GM12878 (cell line): ENCODE measurements at regions of chr3 and their contacts with region 1.

Region 1: GRCh38 chr3:32901432-32902409 is 49.7 kb upstream of the CCR4 start:
- DNase-seq: no peak
- ATAC-seq: peak; percentile 70
- H3K4me3 ChIP-seq: no peak overlapping the region
- H3K27ac ChIP-seq: no peak overlapping the region
- H3K4me1 ChIP-seq: no peaks in the 10 kb centered on the region; the same call in 1 of the 2 replicates
- H3K27me3 ChIP-seq: no peaks in the 10 kb centered on the region
- CTCF ChIP-seq: peak; percentile 24 to 38 (median 32); a peak in 5 of 6 replicates
- EP300 ChIP-seq: no peak
- POLR2A ChIP-seq: no peak
- RAD21 ChIP-seq: no peak

Region 2: GRCh38 chr3:32401556-32402081 is 500.1 kb before region 1 on chr3:
- CTCF ChIA-PET with region 1: no interaction called
- POLR2A ChIA-PET with region 1: no interaction called
- RAD21 ChIA-PET with region 1: no interaction called
- SMC1A ChIA-PET with region 1: no interaction called
- in situ Hi-C with region 1: no loop called
- intact Hi-C with region 1: no loop called
- DNase-seq: no peak
- ATAC-seq: peak; percentile 83
- H3K4me3 ChIP-seq: peak overlapping the region; percentile 61
- H3K27ac ChIP-seq: no peak overlapping the region
- H3K4me1 ChIP-seq: peaks cover 3% of the 10 kb centered on the region
- H3K27me3 ChIP-seq: peaks cover 0 to 3% of the 10 kb centered on the region in 2 experiments; a peak in 1 of 4 replicates
- CTCF ChIP-seq: no peak
- EP300 ChIP-seq: no peak
- POLR2A ChIP-seq: no peak
- RAD21 ChIP-seq: no peak

Region 3: DNA sequence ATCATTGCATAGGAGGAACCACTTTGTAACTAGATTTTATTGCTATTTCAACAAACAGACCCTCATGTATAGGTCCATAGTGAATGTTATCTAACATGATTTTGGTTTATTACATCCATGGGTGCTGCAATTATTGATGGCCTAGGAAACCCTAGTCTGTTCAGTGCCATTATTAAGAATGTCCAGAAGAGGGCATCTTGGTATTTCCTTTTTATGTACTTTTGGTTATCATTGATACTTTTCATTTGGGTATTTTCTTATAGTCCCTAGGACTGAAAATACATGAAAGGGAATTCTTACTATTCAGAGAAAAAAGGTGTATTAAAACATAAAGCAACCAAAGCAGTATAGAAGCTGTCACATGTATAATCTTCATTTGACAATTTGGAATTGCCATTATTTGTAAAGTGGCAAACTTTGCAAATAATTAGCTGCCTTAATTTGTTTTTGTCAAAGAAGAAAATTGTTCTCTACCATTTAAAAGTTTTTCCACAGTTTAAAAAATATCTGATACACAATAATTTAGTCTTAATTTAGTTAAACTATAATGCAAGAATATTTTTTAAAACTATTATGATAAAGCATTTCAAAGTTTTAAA is 168.0 kb before region 1 on chr3:
- CTCF ChIA-PET with region 1: interaction called, 20 read pairs
- POLR2A ChIA-PET with region 1: no interaction called
- RAD21 ChIA-PET with region 1: interaction called, 6 read pairs
- SMC1A ChIA-PET with region 1: interaction called, 17 read pairs
- in situ Hi-C with region 1: no loop called
- intact Hi-C with region 1: loop called (anchors 10 kb)
- DNase-seq: peak; percentile 4
- ATAC-seq: peak; percentile 73
- H3K4me3 ChIP-seq: no peak overlapping the region
- H3K27ac ChIP-seq: no peak overlapping the region
- H3K4me1 ChIP-seq: no peaks in the 10 kb centered on the region
- H3K27me3 ChIP-seq: no peaks in the 10 kb centered on the region
- CTCF ChIP-seq: peak; percentile 48 to 57 (median 57); a peak in 5 of 6 replicates
- EP300 ChIP-seq: no peak
- POLR2A ChIP-seq: no peak
- RAD21 ChIP-seq: peak; percentile 64

Region 4: GRCh38 chr3:32781210-32781968 is 120.3 kb before region 1 on chr3:
- CTCF ChIA-PET with region 1: interaction called, 5 read pairs
- POLR2A ChIA-PET with region 1: no interaction called
- RAD21 ChIA-PET with region 1: interaction called, 6 read pairs
- SMC1A ChIA-PET with region 1: no interaction called
- in situ Hi-C with region 1: no loop called
- intact Hi-C with region 1: loop called (anchors 1 kb)
- DNase-seq: peak; percentile 26
- ATAC-seq: peak; percentile 99
- H3K4me3 ChIP-seq: peak overlapping the region; percentile 66
- H3K27ac ChIP-seq: no peak overlapping the region
- H3K4me1 ChIP-seq: no peaks in the 10 kb centered on the region
- H3K27me3 ChIP-seq: no peaks in the 10 kb centered on the region
- CTCF ChIP-seq: peak; percentile 77 to 87 (median 86)
- EP300 ChIP-seq: no peak
- POLR2A ChIP-seq: no peak
- RAD21 ChIP-seq: peak; percentile 51

Region 5: DNA sequence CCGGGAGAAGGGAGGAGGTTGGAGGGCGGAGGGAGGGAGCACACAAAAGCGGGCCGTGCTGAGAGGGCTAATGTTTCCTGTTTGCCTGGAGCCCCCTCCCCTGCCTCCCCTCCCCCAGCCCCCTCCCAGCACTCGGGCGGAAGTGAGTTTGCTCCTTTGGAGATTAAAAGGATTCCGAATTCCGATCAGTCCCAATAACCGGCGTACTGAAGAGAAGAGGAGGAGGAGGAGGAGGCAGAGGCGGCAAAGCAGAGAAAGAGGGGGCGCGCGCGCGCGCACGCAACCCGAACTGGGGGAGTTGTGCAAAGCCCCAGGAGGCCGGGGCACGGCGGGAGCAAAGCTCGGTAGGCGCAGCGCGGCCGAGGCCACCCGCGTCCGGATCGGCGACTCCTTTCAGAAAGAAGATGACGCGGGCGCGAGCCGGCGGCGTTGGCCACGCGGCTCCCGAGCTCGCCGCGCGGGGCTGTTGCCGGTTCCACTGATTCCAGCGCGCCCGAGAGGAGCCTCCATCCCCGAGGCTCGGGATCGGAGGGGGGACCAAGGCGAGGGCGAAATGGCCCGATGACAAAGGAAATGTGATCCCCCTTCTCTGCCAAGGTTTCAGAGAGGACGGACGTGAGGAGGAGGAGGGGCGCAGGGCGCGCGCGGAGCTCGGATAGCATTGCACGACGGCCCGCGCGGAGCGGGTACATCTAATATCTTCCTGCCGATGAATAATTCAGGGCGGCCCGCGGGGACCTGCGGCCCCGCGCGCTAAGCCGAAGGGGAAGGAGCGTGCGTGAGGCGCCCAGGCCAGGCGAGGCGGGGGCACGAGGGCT is 85.1 kb before region 1 on chr3:
- CTCF ChIA-PET with region 1: interaction called, 12 read pairs
- POLR2A ChIA-PET with region 1: no interaction called
- RAD21 ChIA-PET with region 1: interaction called, 3 read pairs
- SMC1A ChIA-PET with region 1: interaction called, 4 read pairs
- in situ Hi-C with region 1: no loop called
- intact Hi-C with region 1: loop called (anchors 10 kb)
- DNase-seq: no peak
- ATAC-seq: peak; percentile 40
- H3K4me3 ChIP-seq: peak overlapping the region; percentile 32; the same call in 1 of the 2 replicates
- H3K27ac ChIP-seq: no peak overlapping the region
- H3K4me1 ChIP-seq: no peaks in the 10 kb centered on the region
- H3K27me3 ChIP-seq: peaks cover 16 to 19% of the 10 kb centered on the region in 2 experiments
- CTCF ChIP-seq: no peak
- EP300 ChIP-seq: no peak
- POLR2A ChIP-seq: no peak
- RAD21 ChIP-seq: no peak

Region 6: DNA sequence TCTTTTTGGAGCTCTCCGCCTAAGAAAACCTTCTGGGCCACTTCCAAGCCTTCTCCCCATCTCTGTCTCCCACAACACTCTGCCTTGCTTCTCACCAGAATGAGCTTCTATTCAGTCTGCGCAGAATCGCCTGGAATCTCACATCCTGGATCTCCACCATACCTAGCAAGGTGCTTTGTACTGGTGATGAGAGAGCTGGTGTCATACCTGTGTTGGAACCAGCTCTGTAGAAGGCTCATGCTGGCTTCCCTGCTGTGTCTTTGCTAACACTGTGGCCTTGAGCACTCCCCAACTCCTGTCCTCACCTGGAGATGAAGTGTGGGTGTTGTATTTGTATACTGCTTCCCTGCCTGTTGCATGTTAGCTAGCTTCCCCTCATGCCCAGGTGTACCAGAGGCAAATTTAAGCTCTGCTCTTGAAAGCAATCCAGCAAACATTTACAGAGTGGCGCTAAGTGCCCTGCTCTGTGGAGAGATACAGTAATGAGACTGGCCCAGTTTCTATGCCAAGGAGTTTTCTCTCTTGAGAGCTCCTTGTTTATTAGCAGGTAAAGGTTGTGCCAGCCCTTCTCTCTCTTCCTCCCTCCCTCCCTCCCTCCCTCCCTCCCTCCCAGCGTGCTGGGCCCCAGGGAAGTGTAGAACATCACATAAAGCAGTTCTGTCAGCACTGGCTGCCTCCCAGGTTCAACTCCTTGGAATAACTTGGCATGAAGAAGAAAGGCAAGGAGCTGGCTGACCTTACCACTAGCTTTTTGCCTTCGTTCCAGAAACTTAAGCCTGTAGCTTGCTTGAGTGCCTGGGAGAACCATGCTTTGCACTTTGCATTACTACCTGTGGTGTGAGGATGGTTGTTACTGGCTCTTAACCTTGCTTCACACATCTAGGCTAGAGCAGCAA is 29.0 kb before region 1 on chr3:
- CTCF ChIA-PET with region 1: interaction called, 43 read pairs
- POLR2A ChIA-PET with region 1: no interaction called
- RAD21 ChIA-PET with region 1: interaction called, 25 read pairs
- SMC1A ChIA-PET with region 1: interaction called, 10 read pairs
- in situ Hi-C with region 1: no loop called
- intact Hi-C with region 1: no loop called
- DNase-seq: no peak
- ATAC-seq: peak; percentile 13; the same call in 1 of the 3 replicates
- H3K4me3 ChIP-seq: no peak overlapping the region
- H3K27ac ChIP-seq: no peak overlapping the region
- H3K4me1 ChIP-seq: peaks cover 6% of the 10 kb centered on the region; the same call in 1 of the 2 replicates
- H3K27me3 ChIP-seq: no peaks in the 10 kb centered on the region
- CTCF ChIP-seq: no peak
- EP300 ChIP-seq: no peak
- POLR2A ChIP-seq: no peak
- RAD21 ChIP-seq: no peak

Region 7: GRCh38 chr3:32882603-32883025 is 19.1 kb before region 1 on chr3:
- CTCF ChIA-PET with region 1: interaction called, 11 read pairs
- POLR2A ChIA-PET with region 1: no interaction called
- RAD21 ChIA-PET with region 1: interaction called, 13 read pairs
- SMC1A ChIA-PET with region 1: interaction called, 17 read pairs
- in situ Hi-C with region 1: no loop called
- intact Hi-C with region 1: no loop called
- DNase-seq: peak; percentile 76
- ATAC-seq: peak; percentile 94
- H3K4me3 ChIP-seq: no peak overlapping the region
- H3K27ac ChIP-seq: no peak overlapping the region
- H3K4me1 ChIP-seq: peaks cover 19% of the 10 kb centered on the region
- H3K27me3 ChIP-seq: no peaks in the 10 kb centered on the region
- CTCF ChIP-seq: no peak
- EP300 ChIP-seq: peak; percentile 48 to 88; a peak in 3 of 4 replicates
- POLR2A ChIP-seq: no peak
- RAD21 ChIP-seq: no peak

Region 8: GRCh38 chr3:33006081-33006480 is 104.4 kb after region 1 on chr3:
- CTCF ChIA-PET with region 1: no interaction called
- POLR2A ChIA-PET with region 1: no interaction called
- RAD21 ChIA-PET with region 1: no interaction called
- SMC1A ChIA-PET with region 1: no interaction called
- in situ Hi-C with region 1: no loop called
- intact Hi-C with region 1: no loop called
- DNase-seq: no peak
- ATAC-seq: no peak
- H3K4me3 ChIP-seq: no peak overlapping the region
- H3K27ac ChIP-seq: no peak overlapping the region
- H3K4me1 ChIP-seq: no peaks in the 10 kb centered on the region
- H3K27me3 ChIP-seq: no peaks in the 10 kb centered on the region
- CTCF ChIP-seq: no peak
- EP300 ChIP-seq: no peak
- POLR2A ChIP-seq: no peak
- RAD21 ChIP-seq: no peak

Region 9: DNA sequence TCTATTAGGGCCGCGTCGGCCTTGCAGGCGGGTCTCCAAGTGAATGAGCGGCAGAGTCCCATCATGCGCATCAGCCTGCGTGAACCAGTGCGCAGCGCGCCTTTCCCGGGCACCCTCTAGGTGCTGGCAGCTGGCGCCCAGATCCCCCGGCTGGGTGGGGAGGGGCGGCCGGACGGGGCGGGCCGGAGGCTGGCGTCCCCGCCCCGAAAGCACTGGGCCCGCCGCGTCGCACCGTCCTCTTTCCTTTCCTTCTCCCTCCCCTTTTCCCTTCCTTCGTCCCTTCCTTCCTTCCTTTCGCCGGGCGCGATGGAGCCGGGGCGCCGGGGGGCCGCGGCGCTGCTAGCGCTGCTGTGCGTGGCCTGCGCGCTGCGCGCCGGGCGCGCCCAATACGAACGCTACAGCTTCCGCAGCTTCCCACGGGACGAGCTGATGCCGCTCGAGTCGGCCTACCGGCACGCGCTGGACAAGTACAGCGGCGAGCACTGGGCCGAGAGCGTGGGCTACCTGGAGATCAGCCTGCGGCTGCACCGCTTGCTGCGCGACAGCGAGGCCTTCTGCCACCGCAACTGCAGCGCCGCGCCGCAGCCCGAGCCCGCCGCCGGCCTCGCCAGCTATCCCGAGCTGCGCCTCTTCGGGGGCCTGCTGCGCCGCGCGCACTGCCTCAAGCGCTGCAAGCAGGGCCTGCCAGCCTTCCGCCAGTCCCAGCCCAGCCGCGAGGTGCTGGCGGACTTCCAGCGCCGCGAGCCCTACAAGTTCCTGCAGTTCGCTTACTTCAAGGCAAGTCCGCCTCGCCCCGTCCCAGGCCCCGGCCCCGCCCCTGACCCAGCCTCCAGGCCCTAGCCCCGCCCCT is 212.3 kb after region 1 on chr3 and contains the start of gene CRTAP:
- CTCF ChIA-PET with region 1: no interaction called
- POLR2A ChIA-PET with region 1: no interaction called
- RAD21 ChIA-PET with region 1: no interaction called
- SMC1A ChIA-PET with region 1: no interaction called
- in situ Hi-C with region 1: no loop called
- intact Hi-C with region 1: no loop called
- DNase-seq: peak; percentile 45
- ATAC-seq: peak; percentile 92
- H3K4me3 ChIP-seq: peak within 1 kb of the TSS; percentile 75
- H3K27ac ChIP-seq: peak within 1 kb of the TSS; percentile 43
- H3K4me1 ChIP-seq: peaks cover 24% of the 10 kb centered on the region
- H3K27me3 ChIP-seq: no peaks in the 10 kb centered on the region
- CTCF ChIP-seq: no peak
- EP300 ChIP-seq: no peak
- POLR2A ChIP-seq: peak; percentile 87
- RAD21 ChIP-seq: no peak
- polyA plus RNA-seq, gene CRTAP: 6.0 to 6.2 TPM